Activated CD8-positive, alpha-beta T cell treated with anti-CD3 and anti-CD28 coated beads for 36 hours (primary cell): ENCODE measurements at regions of chr13 and their contacts with region 1.

Region 1: GRCh38 chr13:112606109-112607001 is 18.4 kb upstream of the TUBGCP3 start:
- DNase-seq: peak; percentile 90
- ATAC-seq: peak; percentile 100
- H3K4me3 Mint-ChIP-seq: peak overlapping the region; percentile 75
- H3K27ac Mint-ChIP-seq: peak overlapping the region; percentile 22
- H3K4me1 Mint-ChIP-seq: peaks cover 6% of the 10 kb centered on the region
- H3K27me3 Mint-ChIP-seq: peaks cover 10% of the 10 kb centered on the region
- CTCF ChIP-seq: peak; percentile 97

Region 2: GRCh38 chr13:111270765-111271698 is 1335.3 kb before region 1 on chr13:
- CTCF ChIA-PET with region 1: no interaction called
- POLR2A ChIA-PET with region 1: no interaction called
- intact Hi-C with region 1: no loop called
- DNase-seq: no peak
- ATAC-seq: no peak
- H3K4me3 Mint-ChIP-seq: no peak overlapping the region
- H3K27ac Mint-ChIP-seq: no peak overlapping the region
- H3K4me1 Mint-ChIP-seq: peaks cover 16% of the 10 kb centered on the region
- H3K27me3 Mint-ChIP-seq: no peaks in the 10 kb centered on the region
- CTCF ChIP-seq: no peak

Region 3: GRCh38 chr13:112443995-112444860 is 162.1 kb before region 1 on chr13:
- CTCF ChIA-PET with region 1: interaction called, 19 read pairs
- POLR2A ChIA-PET with region 1: no interaction called
- intact Hi-C with region 1: no loop called
- DNase-seq: peak; percentile 75
- ATAC-seq: peak; percentile 92
- H3K4me3 Mint-ChIP-seq: no peak overlapping the region
- H3K27ac Mint-ChIP-seq: no peak overlapping the region
- H3K4me1 Mint-ChIP-seq: no peaks in the 10 kb centered on the region
- H3K27me3 Mint-ChIP-seq: peaks cover 20% of the 10 kb centered on the region
- CTCF ChIP-seq: peak; percentile 87

Region 4: GRCh38 chr13:112587212-112587763 is 19.1 kb before region 1 on chr13:
- CTCF ChIA-PET with region 1: interaction called, 55 read pairs
- POLR2A ChIA-PET with region 1: no interaction called
- intact Hi-C with region 1: no loop called
- DNase-seq: peak; percentile 76
- ATAC-seq: peak; percentile 84
- H3K4me3 Mint-ChIP-seq: peak overlapping the region; percentile 93
- H3K27ac Mint-ChIP-seq: peak overlapping the region; percentile 97
- H3K4me1 Mint-ChIP-seq: peaks cover 37% of the 10 kb centered on the region
- H3K27me3 Mint-ChIP-seq: no peaks in the 10 kb centered on the region
- CTCF ChIP-seq: no peak